Transverse colon (tissue), 4 donors: ENCODE measurements at regions of chr12 and their contacts with region 1.

Region 1: GRCh38 chr12:57899010-57899662 is 42.2 kb upstream of the ATP23 start:
- DNase-seq: peak; percentile 73
- H3K4me3 ChIP-seq: no peak overlapping the region
- H3K27ac ChIP-seq: peak overlapping the region; percentile 94 to 99 (median 96)
- H3K4me1 ChIP-seq: peaks cover 47 to 50% (median 49%) of the 10 kb centered on the region in 4 donors
- H3K27me3 ChIP-seq: no peaks in the 10 kb centered on the region
- CTCF ChIP-seq: no peak
- EP300 ChIP-seq: no peak
- POLR2A ChIP-seq: no peak

Region 2: DNA sequence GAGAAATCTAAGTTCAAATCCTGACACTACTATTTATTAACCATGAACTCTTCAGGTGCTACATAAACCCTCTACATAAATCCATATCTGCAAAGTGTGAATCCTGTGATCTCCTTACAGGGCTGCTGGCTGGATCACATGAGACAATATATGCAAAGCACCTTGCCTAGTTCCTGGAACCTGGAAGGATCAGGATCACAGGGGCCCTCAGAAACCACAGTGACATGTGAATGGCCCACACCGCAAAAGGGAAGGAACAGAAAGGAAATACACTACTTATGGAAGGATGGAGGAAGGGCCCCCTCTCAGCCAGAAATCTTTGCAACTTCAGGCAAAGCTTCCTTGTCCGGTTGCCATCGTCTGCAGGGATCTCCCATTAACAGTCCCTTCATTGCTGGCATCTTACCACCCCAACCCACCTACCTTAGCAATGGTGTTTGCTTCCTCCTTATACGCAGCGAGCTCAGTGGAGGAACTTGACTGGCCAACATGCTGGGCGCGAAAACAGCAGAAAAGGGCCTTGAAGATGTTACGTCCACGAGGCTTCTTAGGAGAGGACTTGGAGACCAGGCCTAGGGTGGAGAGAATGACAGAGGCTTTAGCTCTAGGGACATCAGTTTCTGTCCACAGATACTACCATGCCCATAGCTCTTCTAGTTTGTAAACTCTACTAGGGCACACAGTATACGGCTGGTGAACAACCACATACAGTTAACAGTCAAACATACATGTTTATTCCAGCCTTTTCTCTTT is 69.9 kb before region 1 on chr12:
- in situ Hi-C with region 1: loop called in 1 of 4 experiments (anchors 10 kb)
- intact Hi-C with region 1: loop called (anchors 2 kb)
- DNase-seq: no peak
- H3K4me3 ChIP-seq: no peak overlapping the region
- H3K27ac ChIP-seq: peak overlapping the region in 1 of 4 donors; percentile 85
- H3K4me1 ChIP-seq: peaks cover 33 to 55% (median 41%) of the 10 kb centered on the region in 4 donors
- H3K27me3 ChIP-seq: no peaks in the 10 kb centered on the region
- CTCF ChIP-seq: no peak
- EP300 ChIP-seq: no peak
- POLR2A ChIP-seq: no peak

Region 3: GRCh38 chr12:57865090-57865751 is 33.9 kb before region 1 on chr12:
- in situ Hi-C with region 1: no loop called
- intact Hi-C with region 1: loop called (anchors 2 kb)
- DNase-seq: peak; percentile 82
- H3K4me3 ChIP-seq: peak overlapping the region; percentile 51 to 70 (median 62)
- H3K27ac ChIP-seq: peak overlapping the region; percentile 90 to 98 (median 96)
- H3K4me1 ChIP-seq: peaks cover 9 to 40% (median 19%) of the 10 kb centered on the region in 4 donors
- H3K27me3 ChIP-seq: no peaks in the 10 kb centered on the region
- CTCF ChIP-seq: no peak
- EP300 ChIP-seq: no peak
- POLR2A ChIP-seq: peak; percentile 69